ENCODE measurements at regions of chr10 and their contacts with region 1.

Region 1: DNA sequence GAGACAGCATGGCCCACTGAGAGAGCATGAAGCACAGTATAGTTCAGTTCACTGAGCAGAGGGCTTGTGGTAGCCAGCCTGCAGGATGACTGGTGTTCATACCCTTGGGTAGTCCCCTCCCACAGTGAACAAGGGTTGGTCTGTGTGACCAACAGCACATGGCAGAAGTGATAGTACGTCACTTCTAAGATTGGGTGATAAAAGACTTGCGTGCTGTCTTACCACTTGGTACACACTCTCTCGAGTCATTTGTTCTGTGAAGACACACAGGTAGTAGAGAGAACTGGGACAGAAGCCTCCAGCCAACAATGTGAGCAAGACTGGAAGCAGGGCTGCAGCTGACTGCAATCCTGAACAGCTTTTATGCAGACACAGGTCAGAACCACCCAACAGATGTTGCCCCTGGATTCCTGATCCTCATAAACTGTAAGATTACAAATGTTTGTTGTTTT is 14.6 kb downstream of the EPC1 start:
- DNase-seq: no peak
- ATAC-seq: peak; percentile 81
- H3K4me3 ChIP-seq: no peak overlapping the region
- H3K27ac ChIP-seq: peak overlapping the region; percentile 12
- H3K4me1 ChIP-seq: peaks cover 81% of the 10 kb centered on the region
- H3K27me3 ChIP-seq: no peaks in the 10 kb centered on the region
- CTCF ChIP-seq: no peak

Region 2: DNA sequence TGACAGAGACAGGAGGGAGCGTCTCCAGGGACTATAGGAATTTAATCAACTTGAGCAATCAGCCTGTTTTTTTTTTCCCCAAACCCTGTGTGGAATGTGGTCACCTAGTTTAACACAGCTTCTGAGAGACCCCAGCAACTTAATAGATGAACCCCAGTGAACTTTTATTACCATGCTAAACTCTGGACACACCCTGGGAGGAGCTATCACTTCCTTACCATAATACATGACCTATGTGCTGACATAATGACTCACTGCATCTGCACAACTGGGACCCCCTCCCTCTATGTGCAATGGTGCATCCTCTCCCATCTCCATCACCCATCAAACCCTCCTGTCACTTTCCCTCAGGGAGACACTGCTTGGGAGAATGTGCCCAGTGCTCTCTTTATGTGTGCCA is 69.0 kb before region 1 on chr10:
- intact Hi-C with region 1: loop called (anchors 10 kb)
- DNase-seq: no peak
- ATAC-seq: peak; percentile 34
- H3K4me3 ChIP-seq: no peak overlapping the region
- H3K27ac ChIP-seq: no peak overlapping the region
- H3K4me1 ChIP-seq: no peaks in the 10 kb centered on the region
- H3K27me3 ChIP-seq: no peaks in the 10 kb centered on the region
- CTCF ChIP-seq: no peak

Region 3: DNA sequence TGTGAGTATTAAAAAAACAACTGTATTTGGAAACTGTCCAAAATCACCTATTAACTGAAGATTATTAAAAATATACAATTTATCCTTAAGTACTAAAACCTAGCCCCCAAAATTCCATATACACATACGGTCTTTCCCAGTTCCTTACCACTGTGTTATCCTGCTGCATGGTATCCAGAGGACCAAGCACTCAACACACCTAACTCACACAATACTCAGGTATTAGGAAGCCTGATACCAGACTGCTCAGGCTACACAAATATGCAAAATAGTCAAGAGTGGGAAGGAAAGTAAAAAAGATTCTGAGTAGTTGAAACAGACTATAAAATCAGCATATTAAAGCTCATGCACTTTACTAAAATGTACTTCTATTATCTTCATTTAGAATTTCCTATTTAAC is 52.5 kb before region 1 on chr10:
- intact Hi-C with region 1: no loop called
- DNase-seq: no peak
- ATAC-seq: peak; percentile 61
- H3K4me3 ChIP-seq: no peak overlapping the region
- H3K27ac ChIP-seq: no peak overlapping the region
- H3K4me1 ChIP-seq: no peaks in the 10 kb centered on the region
- H3K27me3 ChIP-seq: no peaks in the 10 kb centered on the region
- CTCF ChIP-seq: no peak

Region 4: DNA sequence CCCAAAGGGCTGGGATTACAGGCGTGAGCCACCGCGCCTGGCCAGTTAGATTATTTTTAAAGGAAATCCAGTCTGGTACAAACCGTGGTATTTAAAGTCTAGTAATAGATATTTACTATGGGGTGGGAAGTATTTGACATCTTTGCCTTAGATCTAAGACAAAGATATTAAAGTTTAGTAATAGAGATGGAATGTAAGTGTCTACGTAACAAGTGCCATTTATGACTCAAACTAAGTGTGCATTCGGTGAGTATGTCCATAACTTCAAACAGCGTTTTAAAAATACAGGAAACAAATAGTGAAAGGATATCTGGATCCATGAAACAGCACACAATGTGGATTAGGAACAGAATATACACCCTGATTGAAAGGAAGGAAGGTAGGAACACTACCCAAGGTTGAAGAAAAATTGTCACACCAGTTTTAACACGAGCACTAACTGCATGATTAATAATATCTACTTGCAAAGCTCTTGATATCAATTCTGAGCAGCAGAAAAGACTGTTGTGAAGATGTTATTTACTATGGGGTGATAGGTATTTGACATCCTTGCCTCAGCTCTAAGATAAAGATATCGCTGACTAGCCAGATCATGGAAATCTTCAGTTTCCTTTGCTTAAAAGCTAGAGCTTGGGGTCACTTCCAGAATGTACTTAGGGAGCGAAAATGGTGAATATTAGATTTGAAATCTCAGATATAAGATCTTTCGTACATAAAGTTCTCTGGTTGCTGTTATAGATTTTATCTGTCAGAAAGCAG is 34.1 kb before region 1 on chr10:
- intact Hi-C with region 1: no loop called
- DNase-seq: no peak
- ATAC-seq: no peak
- H3K4me3 ChIP-seq: no peak overlapping the region
- H3K27ac ChIP-seq: peak overlapping the region; percentile 17
- H3K4me1 ChIP-seq: peaks cover 29% of the 10 kb centered on the region
- H3K27me3 ChIP-seq: no peaks in the 10 kb centered on the region
- CTCF ChIP-seq: no peak

Measured in upper lobe of right lung (tissue), 1 donor.